Dorsolateral prefrontal cortex (tissue), 120 donors: ENCODE measurements at regions of chr6 and their contacts with region 1.

Region 1: DNA sequence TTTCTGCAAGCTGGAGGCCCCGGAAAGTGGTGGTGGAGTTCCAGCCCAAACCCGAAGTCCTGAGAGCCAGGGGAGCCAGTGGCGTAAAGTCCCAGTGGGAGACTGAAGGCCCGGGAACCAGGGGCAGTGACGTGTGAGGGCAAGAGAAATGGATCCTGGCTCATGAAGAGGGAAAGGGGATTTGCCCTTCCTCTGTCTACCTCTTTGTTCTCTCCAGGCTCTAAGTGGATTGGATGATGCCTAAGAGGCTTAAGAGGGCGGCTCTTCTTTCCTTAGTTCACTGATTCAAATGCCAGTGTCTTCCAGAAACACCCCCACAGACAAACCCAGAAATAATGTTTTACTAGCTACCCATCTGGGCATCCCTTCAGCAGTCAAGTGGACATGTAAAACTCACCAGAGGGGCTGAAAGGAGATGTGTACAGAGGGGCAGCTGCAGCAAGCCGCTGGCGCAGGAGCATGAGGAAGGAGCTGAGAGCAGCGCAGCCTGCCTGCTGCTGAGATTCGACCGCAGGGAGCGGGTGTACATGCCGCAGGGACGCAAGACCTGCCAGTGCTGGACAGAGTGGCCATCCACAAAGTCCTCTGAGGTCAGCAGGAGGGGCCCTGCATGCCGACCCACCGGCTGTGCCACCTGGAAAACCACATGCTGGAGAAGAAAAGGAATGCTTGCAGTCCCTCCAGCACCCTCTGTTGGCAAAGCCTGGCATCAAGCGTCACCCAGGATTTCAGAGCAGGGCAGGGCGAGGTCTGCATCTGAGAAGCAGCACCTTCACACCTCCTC is 29.5 kb downstream of the CDYL start:
- DNase-seq: peak; percentile 42 to 78 (median 68)
- H3K4me3 ChIP-seq: peak overlapping the region in 15 of 59 donors; percentile 8 to 34 (median 17)
- H3K27ac ChIP-seq: no peak overlapping the region
- H3K27me3 ChIP-seq: no peaks in the 10 kb centered on the region
- CTCF ChIP-seq: peak; percentile 32 to 79 (median 68)

Region 2: DNA sequence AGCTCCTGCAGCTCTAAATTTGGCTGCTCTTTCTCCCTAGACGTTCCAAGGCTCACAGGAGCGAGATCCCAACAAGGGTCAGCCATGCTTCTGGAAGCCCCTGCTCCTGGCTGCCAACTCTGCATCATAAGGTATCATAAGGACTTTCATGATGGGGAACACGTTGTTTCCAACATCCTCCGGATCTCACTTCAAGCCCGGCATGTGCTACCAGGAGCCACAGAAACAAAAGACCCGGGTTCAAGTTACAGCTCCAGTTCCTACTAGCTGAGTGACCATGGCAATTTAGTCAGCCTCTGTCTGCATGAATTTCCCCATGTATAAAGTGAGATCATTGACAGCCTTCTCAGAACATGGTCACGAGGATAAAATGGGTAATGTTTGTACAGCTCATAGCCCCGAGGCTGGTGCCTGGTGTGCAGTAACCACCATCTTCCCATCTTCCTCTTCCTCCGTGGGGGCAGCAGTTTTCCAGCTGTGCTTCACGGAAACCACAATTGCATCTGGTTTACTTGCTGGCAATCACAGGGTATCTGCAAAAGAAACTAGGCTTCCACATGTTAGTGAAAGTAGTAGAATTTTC is 461.3 kb before region 1 on chr6:
- intact Hi-C with region 1: loop called in 1 of 2 experiments (anchors 10 kb)
- DNase-seq: no peak
- H3K4me3 ChIP-seq: no peak overlapping the region
- H3K27ac ChIP-seq: no peak overlapping the region
- H3K27me3 ChIP-seq: peaks cover 0 to 4% (median 0%) of the 10 kb centered on the region in 45 donors
- CTCF ChIP-seq: no peak

Region 3: DNA sequence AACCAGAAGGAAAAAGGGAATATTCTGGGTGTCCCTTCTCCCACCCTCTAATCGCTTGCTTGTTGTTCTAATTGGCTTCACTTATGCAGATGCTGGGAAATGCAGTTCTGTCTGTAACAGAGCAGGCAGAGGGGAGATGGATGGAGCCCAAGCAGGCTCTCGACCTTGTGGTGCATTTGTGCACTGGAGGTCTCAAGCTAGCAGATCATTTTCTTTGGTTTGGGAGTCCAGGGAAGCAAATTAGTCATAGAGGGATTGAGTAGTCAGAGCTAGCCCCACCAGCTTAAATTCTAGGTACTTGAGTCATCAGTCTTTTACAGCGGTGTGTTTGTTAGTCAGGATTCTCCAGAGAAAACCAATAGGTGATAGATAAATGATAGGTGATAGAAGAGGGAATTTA is 435.7 kb before region 1 on chr6:
- intact Hi-C with region 1: no loop called
- DNase-seq: no peak
- H3K4me3 ChIP-seq: no peak overlapping the region
- H3K27ac ChIP-seq: no peak overlapping the region
- H3K27me3 ChIP-seq: no peaks in the 10 kb centered on the region
- CTCF ChIP-seq: no peak

Region 4: DNA sequence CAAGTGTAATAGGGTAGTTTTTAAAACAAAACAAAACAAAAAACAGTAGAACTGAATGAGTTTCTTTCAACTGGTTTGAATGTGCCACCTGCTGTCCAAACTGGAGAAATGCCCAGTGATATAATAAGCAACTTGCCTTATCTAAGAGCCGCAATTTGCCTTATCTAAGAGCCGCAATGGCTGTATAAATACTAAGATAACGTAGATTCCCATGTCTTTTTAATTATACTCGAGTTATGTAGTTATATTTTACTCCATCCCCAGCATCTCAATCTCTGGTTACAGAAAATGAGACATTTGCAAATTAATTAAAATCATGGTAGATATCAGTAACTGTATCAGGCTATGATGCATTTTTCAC is 130.9 kb after region 1 on chr6:
- intact Hi-C with region 1: loop called in 1 of 2 experiments (anchors 10 kb)
- DNase-seq: peak in 1 of 10 donors; percentile 21
- H3K4me3 ChIP-seq: peak overlapping the region in 5 of 59 donors; percentile 1 to 27 (median 5)
- H3K27ac ChIP-seq: no peak overlapping the region
- H3K27me3 ChIP-seq: no peaks in the 10 kb centered on the region
- CTCF ChIP-seq: peak; percentile 50 to 84 (median 70)